Activated CD8-positive, alpha-beta T cell treated with anti-CD3 and anti-CD28 coated beads for 36 hours (primary cell): ENCODE measurements at regions of chr3 and their contacts with region 1.

Region 1: GRCh38 chr3:12994607-12995388 is 78.4 kb downstream of the IQSEC1 start:
- DNase-seq: peak; percentile 89
- ATAC-seq: peak; percentile 89
- H3K4me3 Mint-ChIP-seq: peak overlapping the region; percentile 94
- H3K27ac Mint-ChIP-seq: peak overlapping the region; percentile 88
- H3K4me1 Mint-ChIP-seq: peaks cover 55% of the 10 kb centered on the region
- H3K27me3 Mint-ChIP-seq: no peaks in the 10 kb centered on the region
- CTCF ChIP-seq: peak; percentile 90

Region 2: DNA sequence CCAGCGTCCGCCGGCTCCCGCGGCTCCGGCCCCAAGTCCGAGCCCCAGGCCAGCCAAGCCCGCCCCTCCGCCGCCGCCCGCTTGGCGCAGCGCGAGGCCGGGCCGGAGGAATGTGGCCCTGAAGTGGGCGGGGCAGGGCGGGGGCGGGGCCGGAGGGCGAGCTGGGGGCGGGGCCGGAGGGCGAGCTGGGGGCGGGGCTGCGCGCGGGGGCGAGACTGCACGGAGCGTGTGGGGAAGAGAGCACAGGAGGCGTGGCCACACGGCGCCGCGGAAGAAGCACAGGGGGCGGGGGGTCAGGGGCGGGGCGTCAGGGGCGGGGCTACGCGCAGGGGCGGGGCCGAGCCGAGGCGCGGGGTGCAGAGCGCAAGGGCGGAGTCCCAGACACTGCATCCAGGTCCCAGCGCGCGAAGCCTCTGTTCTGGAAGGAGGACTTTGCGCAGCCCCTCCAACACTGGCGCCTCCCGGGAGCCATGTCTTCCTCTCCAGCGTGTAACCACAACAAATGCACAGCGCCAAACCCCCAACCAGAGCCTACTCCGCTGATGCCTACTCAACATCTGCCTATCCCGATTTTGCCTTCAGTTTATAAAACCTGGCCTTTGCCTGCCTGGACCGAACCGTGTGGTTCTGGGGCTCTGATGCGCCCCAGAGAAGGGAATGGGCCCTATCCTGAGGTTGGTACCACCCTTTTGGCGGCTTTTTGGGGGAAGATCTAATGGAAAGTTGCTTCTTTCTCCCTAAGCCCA is 27.0 kb before region 1 on chr3:
- CTCF ChIA-PET with region 1: interaction called, 15 read pairs
- POLR2A ChIA-PET with region 1: no interaction called
- intact Hi-C with region 1: no loop called
- DNase-seq: peak; percentile 90
- ATAC-seq: peak; percentile 95
- H3K4me3 Mint-ChIP-seq: peak overlapping the region; percentile 71
- H3K27ac Mint-ChIP-seq: no peak overlapping the region
- H3K4me1 Mint-ChIP-seq: peaks cover 51% of the 10 kb centered on the region
- H3K27me3 Mint-ChIP-seq: no peaks in the 10 kb centered on the region
- CTCF ChIP-seq: no peak

Region 3: GRCh38 chr3:13012228-13012691 is 17.5 kb after region 1 on chr3:
- CTCF ChIA-PET with region 1: interaction called, 118 read pairs
- POLR2A ChIA-PET with region 1: interaction called, 47 read pairs
- intact Hi-C with region 1: no loop called
- DNase-seq: peak; percentile 87
- ATAC-seq: peak; percentile 45
- H3K4me3 Mint-ChIP-seq: peak overlapping the region; percentile 59
- H3K27ac Mint-ChIP-seq: peak overlapping the region; percentile 99
- H3K4me1 Mint-ChIP-seq: peaks cover 93% of the 10 kb centered on the region
- H3K27me3 Mint-ChIP-seq: no peaks in the 10 kb centered on the region
- CTCF ChIP-seq: no peak